A549 (cell line): ENCODE measurements at regions of chr16 and their contacts with region 1.

Region 1: DNA sequence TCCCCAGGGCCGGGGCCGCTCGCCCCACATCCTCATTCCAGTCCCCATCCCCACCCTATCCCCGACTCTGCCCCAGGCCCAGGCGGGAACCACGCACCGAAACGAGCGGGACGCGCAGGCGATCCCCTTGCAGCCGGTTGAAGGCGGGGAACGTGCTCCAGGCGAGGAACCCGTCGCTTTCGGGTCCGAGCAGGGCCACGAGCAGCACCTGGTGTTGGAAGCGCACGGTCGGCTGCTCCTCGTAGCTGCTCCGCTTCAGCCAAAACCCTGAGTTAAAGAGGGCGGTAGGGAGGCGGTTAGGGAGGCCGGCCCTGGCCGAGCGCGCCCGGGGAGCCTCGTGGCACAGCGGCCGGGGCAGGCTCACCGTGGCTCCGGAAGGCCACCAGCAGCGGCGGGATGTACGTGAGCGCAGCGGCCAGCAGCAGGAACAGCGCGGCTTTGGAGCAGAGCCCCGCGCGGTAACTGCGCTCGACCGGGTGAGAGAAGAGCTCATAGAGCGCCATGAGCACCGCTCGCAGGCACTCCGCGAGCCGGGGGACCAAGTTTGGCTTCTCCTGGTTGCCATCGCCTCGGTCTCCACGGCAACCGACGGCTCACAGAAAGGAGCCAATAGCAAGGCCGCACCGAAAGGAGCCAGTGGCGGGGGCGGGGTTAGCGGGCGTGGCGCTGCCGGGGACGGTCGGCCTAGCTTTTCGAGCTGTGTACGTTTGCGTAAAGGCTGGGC is at the start of gene TMEM231:
- DNase-seq: peak; percentile 91 to 95
- ATAC-seq: peak; percentile 95
- H3K4me3 ChIP-seq: peak within 1 kb of the TSS; percentile 80
- H3K27ac ChIP-seq: peak within 1 kb of the TSS; percentile 70 to 76
- H3K4me1 ChIP-seq: peaks cover 13% of the 10 kb centered on the region; the same call in 2 of the 3 replicates
- CTCF ChIP-seq: no peak
- EP300 ChIP-seq: no peak
- POLR2A ChIP-seq: peak; percentile 49; the same call in 1 of the 2 replicates
- RAD21 ChIP-seq: no peak
- polyA plus RNA-seq, gene TMEM231: 11.4 and 17.7 TPM in 2 replicates

Region 2: GRCh38 chr16:75566040-75566810 is 10.4 kb after region 1 on chr16 and contains the start of gene GABARAPL2:
- CTCF ChIA-PET with region 1: interaction called, 6 read pairs
- POLR2A ChIA-PET with region 1: interaction called, 15 read pairs
- DNase-seq: peak; percentile 74 to 76
- ATAC-seq: peak; percentile 87 to 91
- H3K4me3 ChIP-seq: peak within 1 kb of the TSS; percentile 76
- H3K27ac ChIP-seq: peak within 1 kb of the TSS; percentile 79 to 92
- H3K4me1 ChIP-seq: peaks cover 15% of the 10 kb centered on the region
- CTCF ChIP-seq: no peak
- EP300 ChIP-seq: no peak
- POLR2A ChIP-seq: peak; percentile 61
- RAD21 ChIP-seq: no peak
- polyA plus RNA-seq, gene GABARAPL2: 80.6 and 84.8 TPM in 2 replicates

Region 3: DNA sequence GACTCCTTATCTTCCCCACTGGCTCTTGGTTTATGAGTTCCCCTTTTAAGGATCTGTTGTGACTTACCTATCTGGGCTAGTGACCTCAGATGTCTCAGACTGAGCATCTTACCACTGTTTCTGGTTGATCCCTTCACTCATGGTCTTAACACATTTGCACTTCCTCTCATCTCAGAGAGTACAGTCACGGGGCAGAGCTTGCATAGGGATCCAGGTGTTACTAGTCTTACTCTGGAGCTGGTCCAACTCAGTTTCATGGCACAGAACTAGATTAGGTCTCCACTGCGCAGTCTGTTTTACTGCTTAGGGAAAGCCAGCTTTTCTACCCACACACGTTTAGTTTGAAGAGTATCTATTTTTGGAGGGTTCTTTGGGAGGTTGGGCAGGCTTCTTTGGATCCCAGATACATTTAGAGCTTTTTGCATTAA is 20.5 kb after region 1 on chr16:
- CTCF ChIA-PET with region 1: no interaction called
- POLR2A ChIA-PET with region 1: no interaction called
- DNase-seq: no peak
- ATAC-seq: no peak
- H3K4me3 ChIP-seq: no peak overlapping the region
- H3K27ac ChIP-seq: no peak overlapping the region
- H3K4me1 ChIP-seq: no peaks in the 10 kb centered on the region
- CTCF ChIP-seq: no peak
- EP300 ChIP-seq: no peak
- POLR2A ChIP-seq: no peak
- RAD21 ChIP-seq: no peak